Thyroid gland (tissue), 4 donors: ENCODE measurements at regions of chr6 and their contacts with region 1.

Region 1: GRCh38 chr6:151021896-151022295 is 156.4 kb downstream of the MTHFD1L start:
- DNase-seq: no peak
- H3K4me3 ChIP-seq: no peak overlapping the region
- H3K27ac ChIP-seq: peak overlapping the region in 1 of 3 donors; percentile 32
- H3K4me1 ChIP-seq: peaks cover 24 to 47% of the 10 kb centered on the region in 2 donors
- H3K27me3 ChIP-seq: no peaks in the 10 kb centered on the region
- CTCF ChIP-seq: peak in 1 of 6 experiments; percentile 3
- POLR2A ChIP-seq: no peak

Region 2: GRCh38 chr6:151160929-151161757 is 139.2 kb after region 1 on chr6:
- intact Hi-C with region 1: loop called (anchors 10 kb)
- DNase-seq: peak; percentile 94 to 95
- H3K4me3 ChIP-seq: no peak overlapping the region
- H3K27ac ChIP-seq: peak overlapping the region; percentile 61 to 83 (median 80)
- H3K4me1 ChIP-seq: peaks cover 10 to 15% of the 10 kb centered on the region in 2 donors
- H3K27me3 ChIP-seq: no peaks in the 10 kb centered on the region
- CTCF ChIP-seq: no peak
- POLR2A ChIP-seq: peak in 1 of 2 donors; percentile 27